CD4-positive, alpha-beta T cell (primary cell): ENCODE measurements at regions of chr11 and their contacts with region 1.

Region 1: DNA sequence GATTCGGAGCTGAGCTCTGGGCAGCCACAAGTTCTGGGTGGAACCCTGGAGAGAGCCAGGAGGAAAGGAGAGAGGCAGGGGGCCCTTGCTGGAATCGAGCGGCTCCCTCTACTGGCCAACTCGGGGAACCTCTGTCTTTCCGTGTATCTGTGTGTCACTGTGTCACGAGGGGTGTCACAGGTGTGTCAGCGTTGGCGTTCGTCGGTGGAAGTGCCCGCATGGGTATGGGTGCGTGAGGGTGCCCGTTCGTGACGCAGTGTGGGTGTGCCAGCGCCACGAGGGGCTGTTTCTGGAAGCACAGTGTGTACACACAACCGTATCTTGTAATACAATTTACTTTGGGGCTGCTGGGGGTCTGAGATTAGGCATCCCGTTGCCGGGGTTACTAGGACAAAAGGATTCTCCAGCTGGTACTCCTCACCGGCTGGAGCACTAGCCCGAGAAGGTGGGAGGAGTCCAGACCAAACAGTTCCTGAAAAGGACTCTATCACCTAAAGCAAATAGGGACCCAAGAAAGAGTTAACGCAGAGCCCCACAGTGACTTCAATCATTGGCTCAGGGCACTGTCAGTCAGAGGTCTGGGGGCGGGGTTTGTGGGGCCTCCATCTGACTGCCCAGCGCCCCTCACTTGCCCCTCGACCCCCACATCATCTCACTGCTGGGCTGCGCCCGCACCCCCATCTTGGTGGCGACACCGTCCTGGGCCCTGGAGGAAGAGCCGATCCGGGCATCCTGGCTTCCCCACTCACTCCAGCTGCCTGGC is 2.6 kb upstream of the BCL9L start:
- DNase-seq: peak; percentile 88 to 99 (median 92)
- ATAC-seq: peak; percentile 60
- H3K4me3 ChIP-seq: peak overlapping the region; percentile 93
- H3K4me3 Mint-ChIP-seq: peak overlapping the region; percentile 89
- H3K27ac ChIP-seq: peak overlapping the region; percentile 98 to 100
- H3K27ac Mint-ChIP-seq: peak overlapping the region; percentile 97
- H3K4me1 ChIP-seq: peaks cover 57% of the 10 kb centered on the region
- H3K4me1 Mint-ChIP-seq: peaks cover 55% of the 10 kb centered on the region
- H3K27me3 ChIP-seq: no peaks in the 10 kb centered on the region
- H3K27me3 Mint-ChIP-seq: peaks cover 5% of the 10 kb centered on the region
- CTCF ChIP-seq: peak; percentile 95

Region 2: DNA sequence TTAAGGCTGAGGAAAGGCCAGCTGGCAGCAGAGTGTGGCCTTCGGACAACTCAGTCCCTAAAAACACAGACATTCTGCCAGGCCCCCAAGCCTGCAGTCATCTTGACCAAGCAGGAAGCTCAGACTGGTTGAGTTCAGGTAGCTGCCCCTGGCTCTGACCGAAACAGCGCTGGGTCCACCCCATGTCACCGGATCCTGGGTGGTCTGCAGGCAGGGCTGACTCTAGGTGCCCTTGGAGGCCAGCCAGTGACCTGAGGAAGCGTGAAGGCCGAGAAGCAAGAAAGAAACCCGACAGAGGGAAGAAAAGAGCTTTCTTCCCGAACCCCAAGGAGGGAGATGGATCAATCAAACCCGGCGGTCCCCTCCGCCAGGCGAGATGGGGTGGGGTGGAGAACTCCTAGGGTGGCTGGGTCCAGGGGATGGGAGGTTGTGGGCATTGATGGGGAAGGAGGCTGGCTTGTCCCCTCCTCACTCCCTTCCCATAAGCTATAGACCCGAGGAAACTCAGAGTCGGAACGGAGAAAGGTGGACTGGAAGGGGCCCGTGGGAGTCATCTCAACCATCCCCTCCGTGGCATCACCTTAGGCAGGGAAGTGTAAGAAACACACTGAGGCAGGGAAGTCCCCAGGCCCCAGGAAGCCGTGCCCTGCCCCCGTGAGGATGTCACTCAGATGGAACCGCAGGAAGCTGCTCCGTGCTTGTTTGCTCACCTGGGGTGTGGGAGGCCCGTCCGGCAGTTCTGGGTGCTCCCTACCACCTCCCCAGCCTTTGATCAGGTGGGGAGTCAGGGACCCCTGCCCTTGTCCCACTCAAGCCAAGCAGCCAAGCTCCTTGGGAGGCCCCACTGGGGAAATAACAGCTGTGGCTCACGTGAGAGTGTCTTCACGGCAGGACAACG is 32.9 kb before region 1 on chr11:
- CTCF ChIA-PET with region 1: interaction called, 8 read pairs
- POLR2A ChIA-PET with region 1: interaction called, 8 read pairs
- intact Hi-C with region 1: loop called in 1 of 2 experiments (anchors 5 kb)
- DNase-seq: peak; percentile 59 to 91 (median 76)
- ATAC-seq: peak; percentile 75
- H3K4me3 ChIP-seq: peak overlapping the region; percentile 18
- H3K4me3 Mint-ChIP-seq: peak overlapping the region; percentile 70
- H3K27ac ChIP-seq: peak overlapping the region; percentile 77 to 89
- H3K27ac Mint-ChIP-seq: peak overlapping the region; percentile 97
- H3K4me1 ChIP-seq: peaks cover 94% of the 10 kb centered on the region
- H3K4me1 Mint-ChIP-seq: peaks cover 76% of the 10 kb centered on the region
- H3K27me3 ChIP-seq: no peaks in the 10 kb centered on the region
- H3K27me3 Mint-ChIP-seq: no peaks in the 10 kb centered on the region
- CTCF ChIP-seq: no peak

Region 3: GRCh38 chr11:118914178-118914918 is 13.9 kb before region 1 on chr11:
- CTCF ChIA-PET with region 1: interaction called, 42 read pairs
- POLR2A ChIA-PET with region 1: no interaction called
- intact Hi-C with region 1: loop called in 1 of 2 experiments (anchors 1 kb)
- DNase-seq: peak in 13 of 14 experiments; percentile 62 to 93 (median 80)
- ATAC-seq: peak; percentile 49
- H3K4me3 ChIP-seq: peak overlapping the region; percentile 54
- H3K4me3 Mint-ChIP-seq: peak overlapping the region; percentile 87
- H3K27ac ChIP-seq: peak overlapping the region; percentile 80 to 96
- H3K27ac Mint-ChIP-seq: peak overlapping the region; percentile 100
- H3K4me1 ChIP-seq: peaks cover 98% of the 10 kb centered on the region
- H3K4me1 Mint-ChIP-seq: peaks cover 86% of the 10 kb centered on the region
- H3K27me3 ChIP-seq: no peaks in the 10 kb centered on the region
- H3K27me3 Mint-ChIP-seq: no peaks in the 10 kb centered on the region
- CTCF ChIP-seq: no peak

Region 4: DNA sequence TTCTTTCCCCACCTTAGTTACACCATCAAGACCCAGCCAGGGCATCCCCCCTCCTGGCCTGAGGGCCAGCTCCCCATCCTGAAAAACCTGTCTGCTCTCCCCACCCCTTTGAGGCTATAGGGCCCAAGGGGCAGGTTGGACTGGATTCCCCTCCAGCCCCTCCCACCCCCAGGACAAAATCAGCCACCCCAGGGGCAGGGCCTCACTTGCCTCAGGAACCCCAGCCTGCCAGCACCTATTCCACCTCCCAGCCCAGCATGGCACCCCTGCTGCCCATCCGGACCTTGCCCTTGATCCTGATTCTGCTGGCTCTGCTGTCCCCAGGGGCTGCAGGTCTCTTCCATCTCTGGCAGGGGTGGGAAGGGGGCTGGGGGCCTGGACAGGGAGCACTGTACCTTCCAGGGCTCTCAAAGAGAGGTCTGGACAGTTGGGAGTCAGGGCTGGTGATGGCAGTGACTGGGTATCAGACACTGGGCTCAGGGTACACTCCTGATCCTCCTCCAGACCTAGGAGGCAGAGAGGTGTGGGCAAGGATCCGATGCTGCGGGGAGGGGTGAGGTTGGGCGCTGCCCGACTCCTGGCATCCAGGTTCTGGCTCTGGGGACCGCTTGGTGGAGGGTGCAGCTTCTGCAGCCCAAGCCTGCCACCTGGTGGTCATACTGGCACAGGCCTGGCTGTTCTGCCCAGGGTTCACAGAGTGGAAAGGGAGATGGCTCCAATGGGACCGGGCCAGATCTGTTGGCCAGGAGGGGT is 28.0 kb after region 1 on chr11 and contains the start of gene UPK2:
- CTCF ChIA-PET with region 1: interaction called, 3 read pairs
- POLR2A ChIA-PET with region 1: no interaction called
- intact Hi-C with region 1: loop called in 1 of 2 experiments (anchors 2 kb)
- DNase-seq: peak; percentile 82 to 95 (median 87)
- ATAC-seq: peak; percentile 99
- H3K4me3 ChIP-seq: no peak within 1 kb of the TSS
- H3K4me3 Mint-ChIP-seq: no peak within 1 kb of the TSS
- H3K27ac ChIP-seq: no peak within 1 kb of the TSS
- H3K27ac Mint-ChIP-seq: no peak within 1 kb of the TSS
- H3K4me1 ChIP-seq: peaks cover 8% of the 10 kb centered on the region
- H3K4me1 Mint-ChIP-seq: no peaks in the 10 kb centered on the region
- H3K27me3 ChIP-seq: no peaks in the 10 kb centered on the region
- H3K27me3 Mint-ChIP-seq: peaks cover 5% of the 10 kb centered on the region
- CTCF ChIP-seq: peak; percentile 90
- total RNA-seq, gene UPK2: 0.27 TPM in 1 of 2 experiments, not detected in the other

Region 5: GRCh38 chr11:118975771-118976709 is 47.8 kb after region 1 on chr11:
- CTCF ChIA-PET with region 1: no interaction called
- POLR2A ChIA-PET with region 1: no interaction called
- intact Hi-C with region 1: no loop called
- DNase-seq: no peak
- ATAC-seq: no peak
- H3K4me3 ChIP-seq: no peak overlapping the region
- H3K4me3 Mint-ChIP-seq: no peak overlapping the region
- H3K27ac ChIP-seq: no peak overlapping the region
- H3K27ac Mint-ChIP-seq: no peak overlapping the region
- H3K4me1 ChIP-seq: no peaks in the 10 kb centered on the region
- H3K4me1 Mint-ChIP-seq: no peaks in the 10 kb centered on the region
- H3K27me3 ChIP-seq: peaks cover 6 to 9% of the 10 kb centered on the region in 2 experiments
- H3K27me3 Mint-ChIP-seq: peaks cover 19% of the 10 kb centered on the region
- CTCF ChIP-seq: no peak

Region 6: DNA sequence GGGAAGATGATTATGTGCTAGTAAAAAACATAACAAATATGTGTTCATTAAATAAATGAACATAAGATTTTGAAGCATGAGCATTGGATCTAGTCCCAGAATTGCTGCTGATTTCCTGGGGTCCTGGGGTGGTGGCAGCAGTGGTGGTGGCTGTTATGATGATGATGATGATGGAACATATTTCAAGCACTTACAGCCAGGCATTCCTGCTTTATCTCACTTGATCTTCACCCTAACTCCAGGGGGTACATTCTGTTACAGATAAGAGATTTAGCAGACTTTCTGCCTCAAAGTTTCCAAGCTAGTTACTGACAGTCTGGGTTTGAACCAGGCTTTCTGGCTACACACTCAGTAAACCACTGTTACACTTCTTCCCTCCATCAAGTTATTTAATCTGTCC is 95.5 kb after region 1 on chr11:
- CTCF ChIA-PET with region 1: no interaction called
- POLR2A ChIA-PET with region 1: no interaction called
- intact Hi-C with region 1: no loop called
- DNase-seq: no peak
- ATAC-seq: no peak
- H3K4me3 ChIP-seq: no peak overlapping the region
- H3K4me3 Mint-ChIP-seq: peak overlapping the region; percentile 31
- H3K27ac ChIP-seq: no peak overlapping the region
- H3K27ac Mint-ChIP-seq: peak overlapping the region; percentile 67
- H3K4me1 ChIP-seq: peaks cover 50% of the 10 kb centered on the region
- H3K4me1 Mint-ChIP-seq: peaks cover 52% of the 10 kb centered on the region
- H3K27me3 ChIP-seq: no peaks in the 10 kb centered on the region
- H3K27me3 Mint-ChIP-seq: no peaks in the 10 kb centered on the region
- CTCF ChIP-seq: no peak

Region 7: GRCh38 chr11:119115484-119116234 is 187.4 kb after region 1 on chr11:
- CTCF ChIA-PET with region 1: no interaction called
- POLR2A ChIA-PET with region 1: interaction called, 3 read pairs
- intact Hi-C with region 1: loop called in 1 of 2 experiments (anchors 5 kb)
- DNase-seq: peak in 6 of 14 experiments; percentile 15 to 73 (median 56)
- ATAC-seq: peak; percentile 94
- H3K4me3 ChIP-seq: peak overlapping the region; percentile 48
- H3K4me3 Mint-ChIP-seq: peak overlapping the region; percentile 71
- H3K27ac ChIP-seq: peak overlapping the region; percentile 59 to 80
- H3K27ac Mint-ChIP-seq: peak overlapping the region; percentile 86
- H3K4me1 ChIP-seq: peaks cover 42% of the 10 kb centered on the region
- H3K4me1 Mint-ChIP-seq: peaks cover 30% of the 10 kb centered on the region
- H3K27me3 ChIP-seq: no peaks in the 10 kb centered on the region
- H3K27me3 Mint-ChIP-seq: no peaks in the 10 kb centered on the region
- CTCF ChIP-seq: no peak